ENCODE measurements at regions of chr6 and their contacts with region 1.

Region 1: GRCh38 chr6:163419413-163420288 is 5.1 kb downstream of the QKI start:
- DNase-seq: no peak
- ATAC-seq: peak; percentile 7; the same call in 1 of the 3 replicates
- H3K4me3 ChIP-seq: peak overlapping the region; percentile 61
- H3K27ac ChIP-seq: no peak overlapping the region
- H3K4me1 ChIP-seq: peaks cover 3% of the 10 kb centered on the region; the same call in 1 of the 2 replicates
- H3K27me3 ChIP-seq: no peaks in the 10 kb centered on the region
- CTCF ChIP-seq: no peak
- EP300 ChIP-seq: no peak
- POLR2A ChIP-seq: no peak
- RAD21 ChIP-seq: no peak

Region 2: GRCh38 chr6:163449076-163449475 is 29.4 kb after region 1 on chr6:
- CTCF ChIA-PET with region 1: interaction called, 4 read pairs
- POLR2A ChIA-PET with region 1: no interaction called
- RAD21 ChIA-PET with region 1: interaction called, 3 read pairs
- SMC1A ChIA-PET with region 1: interaction called, 11 read pairs
- in situ Hi-C with region 1: no loop called
- intact Hi-C with region 1: no loop called
- DNase-seq: no peak
- ATAC-seq: no peak
- H3K4me3 ChIP-seq: no peak overlapping the region
- H3K27ac ChIP-seq: no peak overlapping the region
- H3K4me1 ChIP-seq: no peaks in the 10 kb centered on the region
- H3K27me3 ChIP-seq: no peaks in the 10 kb centered on the region
- CTCF ChIP-seq: no peak
- EP300 ChIP-seq: no peak
- POLR2A ChIP-seq: no peak
- RAD21 ChIP-seq: no peak

Measured in GM12878 (cell line).